ENCODE measurements at regions of chr22 and their contacts with region 1.

Region 1: GRCh38 chr22:30104501-30105156 is 24.4 kb downstream of the HORMAD2 start:
- DNase-seq: peak; percentile 47
- ATAC-seq: peak; percentile 74
- H3K4me3 Mint-ChIP-seq: peak overlapping the region; percentile 51
- H3K27ac Mint-ChIP-seq: peak overlapping the region; percentile 83
- H3K4me1 Mint-ChIP-seq: peaks cover 76% of the 10 kb centered on the region
- H3K27me3 Mint-ChIP-seq: no peaks in the 10 kb centered on the region

Region 2: GRCh38 chr22:30054588-30055033 is 50.0 kb before region 1 on chr22:
- CTCF ChIA-PET with region 1: no interaction called
- POLR2A ChIA-PET with region 1: no interaction called
- DNase-seq: no peak
- ATAC-seq: no peak
- H3K4me3 Mint-ChIP-seq: no peak overlapping the region
- H3K27ac Mint-ChIP-seq: no peak overlapping the region
- H3K4me1 Mint-ChIP-seq: no peaks in the 10 kb centered on the region
- H3K27me3 Mint-ChIP-seq: peaks cover 6% of the 10 kb centered on the region

Region 3: GRCh38 chr22:30116362-30117117 is 11.9 kb after region 1 on chr22:
- CTCF ChIA-PET with region 1: interaction called, 19 read pairs
- POLR2A ChIA-PET with region 1: no interaction called
- DNase-seq: no peak
- ATAC-seq: no peak
- H3K4me3 Mint-ChIP-seq: no peak overlapping the region
- H3K27ac Mint-ChIP-seq: no peak overlapping the region
- H3K4me1 Mint-ChIP-seq: peaks cover 41% of the 10 kb centered on the region
- H3K27me3 Mint-ChIP-seq: no peaks in the 10 kb centered on the region

Region 4: GRCh38 chr22:30178181-30179126 is 73.8 kb after region 1 on chr22:
- CTCF ChIA-PET with region 1: interaction called, 73 read pairs
- POLR2A ChIA-PET with region 1: interaction called, 3 read pairs
- DNase-seq: peak; percentile 74
- ATAC-seq: peak; percentile 82
- H3K4me3 Mint-ChIP-seq: peak overlapping the region; percentile 35
- H3K27ac Mint-ChIP-seq: peak overlapping the region; percentile 93
- H3K4me1 Mint-ChIP-seq: peaks cover 88% of the 10 kb centered on the region
- H3K27me3 Mint-ChIP-seq: no peaks in the 10 kb centered on the region

Region 5: DNA sequence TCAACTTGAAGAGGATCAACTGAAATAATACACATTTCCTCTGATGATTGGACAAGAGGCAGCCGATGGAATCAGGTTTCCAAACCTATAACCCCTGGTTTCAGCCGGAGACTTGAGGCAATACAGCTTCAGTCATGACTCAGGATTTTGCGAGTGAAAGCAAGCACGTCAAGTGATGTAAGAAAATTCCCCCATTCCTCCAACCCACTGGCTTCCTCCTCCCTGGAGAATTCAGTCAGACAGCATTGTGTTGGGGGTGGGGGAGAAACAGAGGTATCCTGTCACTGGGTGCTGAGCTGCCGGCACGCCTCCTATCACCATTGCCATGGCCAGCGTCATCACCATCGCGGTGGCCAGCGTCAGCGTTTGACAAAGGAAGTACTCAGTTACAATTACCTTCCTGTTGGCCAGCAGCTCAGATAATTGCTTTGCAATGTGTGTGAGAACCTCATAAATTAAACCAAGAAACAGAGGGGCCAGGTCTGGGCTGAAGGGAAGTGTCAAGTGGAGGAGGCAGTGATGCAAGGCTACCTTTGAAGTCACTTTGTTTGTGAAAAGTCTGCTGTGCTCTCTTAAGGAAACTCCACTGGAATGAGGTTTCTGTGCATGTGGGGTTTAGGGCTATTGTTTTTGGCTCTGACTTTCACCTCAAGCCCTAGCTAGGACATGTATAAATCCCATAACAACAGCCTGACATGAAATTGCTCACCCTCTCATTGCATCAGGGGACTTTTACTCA is 91.7 kb after region 1 on chr22:
- CTCF ChIA-PET with region 1: interaction called, 18 read pairs
- POLR2A ChIA-PET with region 1: interaction called, 4 read pairs
- DNase-seq: peak; percentile 81
- ATAC-seq: peak; percentile 72
- H3K4me3 Mint-ChIP-seq: peak overlapping the region; percentile 47
- H3K27ac Mint-ChIP-seq: peak overlapping the region; percentile 94
- H3K4me1 Mint-ChIP-seq: peaks cover 81% of the 10 kb centered on the region
- H3K27me3 Mint-ChIP-seq: no peaks in the 10 kb centered on the region

Region 6: DNA sequence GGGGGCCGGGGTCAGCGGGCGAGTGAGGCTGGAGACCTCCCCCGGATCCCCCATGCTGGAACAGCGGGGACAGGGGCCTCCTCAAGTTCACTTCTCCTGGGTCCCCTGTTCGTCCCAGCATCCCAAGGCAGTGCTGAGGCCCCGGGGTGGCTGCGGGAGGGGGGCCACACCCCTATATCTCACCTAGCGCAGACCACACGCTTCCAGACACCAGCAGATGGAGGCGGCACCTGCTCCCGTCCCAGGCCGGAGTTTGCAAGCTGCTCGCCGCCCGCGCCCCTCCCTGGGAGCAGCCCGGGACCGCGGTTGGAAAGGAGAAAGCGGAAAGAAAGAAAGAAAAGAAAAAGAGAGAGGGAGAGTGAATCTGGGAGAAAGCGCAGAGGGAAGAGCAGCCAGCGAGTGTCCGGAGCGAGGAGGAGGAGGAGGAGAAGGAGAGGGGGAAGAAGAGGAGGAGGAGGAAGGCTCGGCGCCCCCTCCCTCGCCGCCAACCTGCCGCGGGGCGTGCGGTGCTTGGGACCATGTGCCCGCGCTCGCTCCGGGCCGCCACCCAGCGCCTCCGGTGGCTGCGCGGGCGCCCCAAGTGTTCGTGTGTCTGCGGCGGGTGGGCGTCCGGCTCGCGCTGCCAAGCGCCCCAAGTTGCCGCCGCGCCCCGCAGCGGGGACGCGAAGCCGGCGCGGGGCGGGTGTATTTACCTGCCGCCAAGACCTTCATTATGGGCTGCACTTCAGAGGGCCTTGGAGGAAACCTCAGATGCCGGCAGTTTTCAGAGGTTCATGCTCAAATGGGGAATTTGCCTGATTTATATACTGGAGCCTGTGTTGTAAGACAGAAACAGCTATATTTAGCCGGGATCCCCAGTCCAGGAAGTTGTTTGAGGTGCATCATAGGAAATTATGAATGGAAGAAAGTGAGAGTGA is 141.6 kb after region 1 on chr22 and contains the start of gene LIF:
- CTCF ChIA-PET with region 1: interaction called, 12 read pairs
- POLR2A ChIA-PET with region 1: interaction called, 6 read pairs
- DNase-seq: peak; percentile 76
- ATAC-seq: peak; percentile 64
- H3K4me3 Mint-ChIP-seq: peak within 1 kb of the TSS; percentile 99
- H3K27ac Mint-ChIP-seq: peak within 1 kb of the TSS; percentile 98
- H3K4me1 Mint-ChIP-seq: peaks cover 74% of the 10 kb centered on the region
- H3K27me3 Mint-ChIP-seq: no peaks in the 10 kb centered on the region
- total RNA-seq, gene LIF: 532 to 569 TPM

Region 7: DNA sequence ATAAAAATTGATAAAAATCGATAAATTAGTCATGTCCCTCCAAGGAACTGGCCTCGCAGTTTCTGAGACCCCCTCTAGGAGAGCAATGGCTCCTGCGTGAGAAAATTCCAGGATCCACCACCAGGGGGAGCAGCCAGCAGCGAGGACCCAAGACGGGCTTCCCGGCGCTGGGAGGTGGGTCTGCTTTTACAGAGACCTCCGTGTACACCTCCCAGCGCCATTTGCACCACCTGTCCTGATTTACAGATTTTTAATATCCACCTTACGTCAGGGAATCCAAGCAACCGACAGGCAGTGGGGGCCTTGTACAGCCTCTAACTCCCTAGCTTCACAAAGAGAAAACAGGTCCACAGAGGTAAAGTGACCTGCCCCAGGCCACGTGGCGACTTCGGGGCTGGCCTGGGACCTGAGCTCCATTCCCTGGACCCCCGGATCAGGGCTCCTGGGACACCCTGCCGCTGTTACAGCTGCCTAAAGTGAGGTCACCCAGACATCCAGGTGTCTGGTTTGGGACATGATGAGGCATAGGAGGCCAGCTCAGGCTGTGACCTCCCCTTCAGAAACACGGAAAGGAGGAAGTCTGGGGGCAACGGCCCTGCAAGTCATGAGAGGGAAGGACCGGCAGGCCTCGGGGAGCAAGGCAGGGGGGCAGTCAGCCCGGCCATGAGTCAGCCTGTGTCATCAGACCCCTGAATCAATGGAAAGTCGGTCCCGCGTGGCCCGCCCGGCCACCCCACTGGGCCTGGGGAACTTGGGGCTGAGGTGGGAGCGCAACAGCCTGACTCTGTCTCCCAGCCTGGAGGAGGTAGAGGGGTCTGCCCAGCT is 158.5 kb after region 1 on chr22:
- CTCF ChIA-PET with region 1: interaction called, 22 read pairs
- POLR2A ChIA-PET with region 1: interaction called, 4 read pairs
- DNase-seq: peak; percentile 87
- ATAC-seq: no peak
- H3K4me3 Mint-ChIP-seq: peak overlapping the region; percentile 96
- H3K27ac Mint-ChIP-seq: peak overlapping the region; percentile 97
- H3K4me1 Mint-ChIP-seq: peaks cover 61% of the 10 kb centered on the region
- H3K27me3 Mint-ChIP-seq: no peaks in the 10 kb centered on the region